Caco-2 (cell line): ENCODE measurements at regions of chr9 and their contacts with region 1.

Region 1: DNA sequence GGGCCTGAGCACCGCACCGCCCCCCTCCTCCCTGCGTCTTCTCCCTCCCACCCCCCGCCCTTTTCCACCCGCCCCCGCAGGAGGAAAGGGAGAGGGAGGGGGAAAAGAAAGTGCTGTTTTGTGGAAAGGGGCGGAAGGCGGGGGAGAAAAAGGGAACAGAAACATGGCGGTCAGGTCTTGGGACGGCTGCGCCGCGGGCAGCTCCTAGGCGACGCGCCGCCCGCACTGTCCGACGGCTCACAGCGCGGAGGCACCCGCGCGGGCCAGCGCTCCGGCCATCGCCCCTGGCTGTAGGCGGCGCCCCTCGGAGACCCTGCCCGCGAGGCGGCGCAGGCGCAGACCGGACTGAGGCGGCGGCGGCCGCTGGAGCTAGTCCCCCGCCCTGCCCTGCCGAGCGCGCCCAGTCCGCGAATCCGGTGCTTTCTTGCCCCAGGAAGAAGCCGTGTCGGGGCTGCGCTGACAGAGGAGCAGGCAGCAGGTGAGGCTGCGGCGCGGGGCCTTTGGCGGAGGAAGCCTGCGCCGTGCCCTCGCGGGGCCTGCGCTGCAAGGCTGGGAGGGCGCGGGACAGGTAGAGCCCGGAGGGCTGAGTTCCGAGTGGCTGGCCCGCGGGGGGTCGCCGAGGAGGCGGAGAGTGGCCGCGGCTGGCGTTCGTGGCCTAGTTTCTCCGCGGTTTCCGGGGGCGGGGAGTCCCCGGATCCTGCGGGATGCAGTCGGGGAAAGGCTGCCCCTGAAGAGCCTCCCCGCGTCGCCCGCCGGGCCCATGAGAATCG is at the start of gene DENND4C:
- DNase-seq: peak; percentile 89 to 94
- H3K4me3 ChIP-seq: peak within 1 kb of the TSS; percentile 85
- H3K4me3 Mint-ChIP-seq: no peak within 1 kb of the TSS
- H3K27ac Mint-ChIP-seq: no peak within 1 kb of the TSS
- H3K4me1 ChIP-seq: peaks cover 14% of the 10 kb centered on the region
- H3K4me1 Mint-ChIP-seq: no peaks in the 10 kb centered on the region
- H3K27me3 ChIP-seq: no peaks in the 10 kb centered on the region
- H3K27me3 Mint-ChIP-seq: no peaks in the 10 kb centered on the region
- CTCF ChIP-seq: no peak
- total RNA-seq, gene DENND4C: 40.1 and 46.9 TPM in 2 replicates

Region 2: DNA sequence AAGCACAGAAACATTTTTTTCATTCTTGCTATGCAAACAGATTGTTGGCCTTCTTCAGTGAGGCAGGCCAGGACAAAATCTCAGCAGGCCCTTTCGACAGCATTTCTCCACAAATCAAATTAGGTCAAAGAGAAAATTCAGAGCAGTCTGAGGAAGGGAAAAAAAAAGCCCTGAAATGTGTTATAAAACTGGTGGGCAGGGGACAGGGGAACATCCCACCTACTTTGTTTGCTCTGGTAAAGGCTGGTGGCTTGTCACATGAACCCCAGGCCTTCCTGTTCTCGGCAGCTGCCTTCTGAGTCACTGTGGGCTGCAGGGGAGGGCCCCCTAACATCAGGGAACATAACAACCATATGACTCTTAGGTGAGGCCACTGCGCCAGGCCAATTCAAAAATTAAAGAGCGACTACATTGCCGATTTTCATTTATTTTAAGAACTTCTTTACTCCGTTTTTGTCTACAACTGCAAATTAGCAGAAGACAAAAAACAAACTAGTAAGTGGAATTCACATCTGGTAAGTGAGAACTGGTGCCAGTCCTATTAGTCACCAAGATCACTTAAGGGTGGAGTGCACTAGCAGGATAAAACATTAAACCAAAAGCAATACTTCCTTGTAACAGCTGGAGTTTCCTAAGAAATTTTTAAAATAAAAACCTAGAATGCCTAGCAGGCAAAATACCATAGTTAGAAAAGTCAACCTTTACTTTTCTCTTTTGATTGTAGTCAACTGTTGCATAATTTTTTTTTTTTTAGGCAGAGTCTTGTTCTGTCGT is 46.2 kb before region 1 on chr9:
- CTCF ChIA-PET with region 1: no interaction called
- POLR2A ChIA-PET with region 1: no interaction called
- intact Hi-C with region 1: loop called (anchors 1 kb)
- DNase-seq: peak; percentile 46 to 69
- H3K4me3 ChIP-seq: no peak overlapping the region
- H3K4me3 Mint-ChIP-seq: peak overlapping the region; percentile 29
- H3K27ac Mint-ChIP-seq: peak overlapping the region; percentile 89
- H3K4me1 ChIP-seq: peaks cover 26% of the 10 kb centered on the region
- H3K4me1 Mint-ChIP-seq: no peaks in the 10 kb centered on the region
- H3K27me3 ChIP-seq: no peaks in the 10 kb centered on the region
- H3K27me3 Mint-ChIP-seq: no peaks in the 10 kb centered on the region
- CTCF ChIP-seq: no peak

Region 3: DNA sequence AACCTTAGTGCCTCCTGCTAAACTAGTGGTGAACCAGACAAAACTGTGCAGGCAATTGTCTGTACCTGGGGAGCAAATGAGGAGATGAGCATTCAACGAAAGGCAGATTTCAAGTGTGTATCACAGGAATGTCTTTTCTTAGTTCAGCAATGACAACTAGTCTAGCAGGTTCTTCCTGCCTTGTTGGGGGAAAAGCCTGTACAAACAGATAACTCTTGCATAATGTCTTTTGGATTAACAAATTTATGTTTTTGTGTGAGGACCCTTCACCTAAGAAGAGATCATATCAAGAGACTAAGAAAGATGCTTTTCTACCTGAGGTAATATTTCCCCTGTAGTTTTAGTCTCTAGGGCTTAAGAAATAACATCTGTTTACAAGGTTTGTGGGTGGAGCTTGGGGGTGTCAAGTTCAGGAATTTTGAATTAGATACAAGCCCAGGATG is 21.8 kb before region 1 on chr9:
- CTCF ChIA-PET with region 1: no interaction called
- POLR2A ChIA-PET with region 1: no interaction called
- intact Hi-C with region 1: loop called (anchors 1 kb)
- DNase-seq: peak; percentile 47 to 72
- H3K4me3 ChIP-seq: no peak overlapping the region
- H3K4me3 Mint-ChIP-seq: peak overlapping the region; percentile 38
- H3K27ac Mint-ChIP-seq: peak overlapping the region; percentile 48
- H3K4me1 ChIP-seq: peaks cover 42% of the 10 kb centered on the region
- H3K4me1 Mint-ChIP-seq: no peaks in the 10 kb centered on the region
- H3K27me3 ChIP-seq: no peaks in the 10 kb centered on the region
- H3K27me3 Mint-ChIP-seq: no peaks in the 10 kb centered on the region
- CTCF ChIP-seq: no peak